ENCODE measurements at regions of chr3 and their contacts with region 1.

Region 1: DNA sequence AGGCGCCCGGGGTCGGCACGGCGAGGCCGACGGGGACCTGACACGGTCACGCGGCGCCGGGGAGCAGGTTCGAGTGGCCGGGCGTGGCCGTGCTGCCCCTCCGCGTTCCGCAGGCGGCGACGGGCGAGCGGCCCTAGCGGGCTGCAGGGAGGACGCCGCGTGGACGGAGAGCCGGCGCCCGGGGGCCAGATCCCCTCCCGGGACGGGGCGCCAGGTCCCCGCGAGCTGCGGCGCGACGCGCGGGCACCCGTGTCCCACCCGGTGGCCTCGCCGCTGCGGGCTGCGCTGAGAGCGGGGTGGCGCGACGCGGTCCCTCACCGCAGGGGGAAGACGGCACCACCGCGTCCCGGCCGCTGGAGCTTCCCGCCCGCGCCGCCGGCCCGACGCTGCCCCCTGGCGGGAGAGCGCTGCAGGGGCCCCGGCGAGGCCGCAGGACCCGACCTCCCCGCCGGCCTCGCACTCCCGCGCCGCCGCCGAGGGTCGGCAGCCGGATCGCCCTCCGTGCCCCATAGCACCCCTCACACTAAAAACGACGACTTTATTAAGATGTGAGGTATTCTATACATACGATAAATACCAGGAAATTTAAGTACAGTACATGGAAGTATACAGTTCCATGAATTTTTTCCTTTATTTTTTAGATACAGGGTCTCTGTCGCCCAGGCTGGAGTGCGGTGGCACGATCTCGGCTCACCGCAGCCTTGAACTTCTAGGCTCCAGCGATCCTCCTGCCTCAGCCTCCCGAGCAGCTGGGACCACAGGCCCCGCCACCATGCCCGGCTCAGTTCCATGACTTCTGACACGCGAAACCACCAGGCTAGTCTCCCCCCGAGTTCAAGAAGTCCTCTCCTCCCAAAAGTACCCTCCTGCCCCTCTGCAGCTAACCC is 1.3 kb upstream of the PIGZ start:
- DNase-seq: peak; percentile 81
- ATAC-seq: peak; percentile 73
- H3K4me3 Mint-ChIP-seq: peak overlapping the region; percentile 83
- H3K27ac Mint-ChIP-seq: peak overlapping the region; percentile 70
- H3K4me1 Mint-ChIP-seq: peaks cover 27% of the 10 kb centered on the region
- H3K27me3 Mint-ChIP-seq: no peaks in the 10 kb centered on the region
- CTCF ChIP-seq: peak; percentile 38

Region 2: DNA sequence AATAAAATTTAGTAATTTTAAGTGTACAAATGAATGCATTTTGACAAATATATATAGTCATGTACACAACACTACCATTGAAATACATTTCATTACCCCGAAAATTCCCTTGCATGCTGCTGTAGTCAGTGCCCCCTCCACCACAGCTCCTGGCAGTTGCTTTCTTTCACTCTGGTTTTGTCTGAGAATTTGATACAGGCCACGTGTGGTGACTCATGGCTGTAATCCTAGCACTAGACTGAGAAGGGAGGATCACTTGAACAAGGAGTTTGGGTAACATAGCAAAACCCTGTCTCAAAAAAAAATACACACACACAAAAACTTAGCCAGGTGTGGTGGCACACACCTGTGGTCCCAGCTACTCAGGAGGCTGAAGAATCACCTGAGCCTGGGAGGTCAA is 953.4 kb before region 1 on chr3:
- CTCF ChIA-PET with region 1: no interaction called
- POLR2A ChIA-PET with region 1: no interaction called
- intact Hi-C with region 1: no loop called
- DNase-seq: no peak
- ATAC-seq: no peak
- H3K4me3 Mint-ChIP-seq: no peak overlapping the region
- H3K27ac Mint-ChIP-seq: no peak overlapping the region
- H3K4me1 Mint-ChIP-seq: no peaks in the 10 kb centered on the region
- H3K27me3 Mint-ChIP-seq: peaks cover 4% of the 10 kb centered on the region
- CTCF ChIP-seq: no peak

Region 3: GRCh38 chr3:196528639-196529233 is 441.2 kb before region 1 on chr3:
- CTCF ChIA-PET with region 1: interaction called, 7 read pairs
- POLR2A ChIA-PET with region 1: no interaction called
- intact Hi-C with region 1: loop called (anchors 2 kb)
- DNase-seq: peak; percentile 92
- ATAC-seq: peak; percentile 97
- H3K4me3 Mint-ChIP-seq: peak overlapping the region; percentile 77
- H3K27ac Mint-ChIP-seq: peak overlapping the region; percentile 68
- H3K4me1 Mint-ChIP-seq: peaks cover 9% of the 10 kb centered on the region
- H3K27me3 Mint-ChIP-seq: no peaks in the 10 kb centered on the region
- CTCF ChIP-seq: no peak

Region 4: DNA sequence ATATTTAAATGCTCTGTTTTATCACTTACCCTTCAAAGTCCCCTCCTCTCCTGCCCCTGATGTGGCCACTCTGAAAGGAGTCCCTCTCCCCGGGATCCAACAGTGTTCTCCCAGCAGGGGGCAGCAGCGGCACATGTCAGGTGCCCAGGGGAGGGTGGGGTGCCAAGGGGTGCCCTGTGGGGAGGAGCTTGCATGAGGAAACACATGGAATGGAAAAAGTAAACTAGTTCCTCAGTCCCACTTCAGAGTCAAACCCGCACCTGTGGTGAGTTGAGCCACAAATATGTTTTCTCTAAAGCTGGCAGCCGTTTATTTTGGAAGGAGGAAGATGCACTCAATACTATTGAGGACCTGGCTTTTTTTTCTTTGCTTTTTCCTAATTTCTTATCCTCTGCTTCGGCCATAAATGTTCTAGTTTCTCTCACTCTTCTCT is 360.5 kb before region 1 on chr3:
- CTCF ChIA-PET with region 1: interaction called, 4 read pairs
- POLR2A ChIA-PET with region 1: no interaction called
- intact Hi-C with region 1: loop called (anchors 1 kb)
- DNase-seq: peak; percentile 89
- ATAC-seq: peak; percentile 96
- H3K4me3 Mint-ChIP-seq: peak overlapping the region; percentile 52
- H3K27ac Mint-ChIP-seq: peak overlapping the region; percentile 69
- H3K4me1 Mint-ChIP-seq: peaks cover 20% of the 10 kb centered on the region
- H3K27me3 Mint-ChIP-seq: no peaks in the 10 kb centered on the region
- CTCF ChIP-seq: peak; percentile 52

Region 5: DNA sequence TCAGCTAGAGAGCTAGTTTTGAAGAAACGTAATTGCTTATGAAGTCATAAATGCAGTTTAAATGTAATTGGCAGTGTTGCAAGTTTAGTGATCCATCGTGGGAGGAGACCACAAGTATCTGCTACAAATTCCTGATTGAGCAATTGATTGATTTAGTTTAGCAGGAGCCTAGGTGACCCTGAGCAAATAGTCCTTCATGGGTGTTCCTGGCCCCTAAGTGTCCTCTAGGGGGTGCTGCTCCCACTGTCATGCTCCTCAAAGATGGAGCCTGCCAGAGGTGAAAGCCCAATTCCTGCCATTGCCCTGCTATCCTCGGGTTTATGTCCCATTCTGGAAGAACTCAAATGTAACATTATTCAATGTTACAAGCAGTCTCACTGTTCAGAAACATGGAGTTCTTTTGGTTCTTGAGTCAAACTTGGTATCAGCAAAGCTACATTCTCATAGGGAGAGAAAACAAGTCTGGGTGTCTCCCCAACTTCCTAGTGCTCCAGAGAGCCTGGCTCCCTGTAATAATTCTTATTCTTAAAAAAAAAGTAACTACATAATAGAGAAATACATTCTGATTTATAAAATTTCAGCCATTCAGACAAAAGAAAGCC is 132.0 kb before region 1 on chr3:
- CTCF ChIA-PET with region 1: interaction called, 65 read pairs
- POLR2A ChIA-PET with region 1: interaction called, 4 read pairs
- intact Hi-C with region 1: loop called (anchors 1 kb)
- DNase-seq: peak; percentile 36
- ATAC-seq: peak; percentile 93
- H3K4me3 Mint-ChIP-seq: no peak overlapping the region
- H3K27ac Mint-ChIP-seq: no peak overlapping the region
- H3K4me1 Mint-ChIP-seq: no peaks in the 10 kb centered on the region
- H3K27me3 Mint-ChIP-seq: no peaks in the 10 kb centered on the region
- CTCF ChIP-seq: no peak

Region 6: DNA sequence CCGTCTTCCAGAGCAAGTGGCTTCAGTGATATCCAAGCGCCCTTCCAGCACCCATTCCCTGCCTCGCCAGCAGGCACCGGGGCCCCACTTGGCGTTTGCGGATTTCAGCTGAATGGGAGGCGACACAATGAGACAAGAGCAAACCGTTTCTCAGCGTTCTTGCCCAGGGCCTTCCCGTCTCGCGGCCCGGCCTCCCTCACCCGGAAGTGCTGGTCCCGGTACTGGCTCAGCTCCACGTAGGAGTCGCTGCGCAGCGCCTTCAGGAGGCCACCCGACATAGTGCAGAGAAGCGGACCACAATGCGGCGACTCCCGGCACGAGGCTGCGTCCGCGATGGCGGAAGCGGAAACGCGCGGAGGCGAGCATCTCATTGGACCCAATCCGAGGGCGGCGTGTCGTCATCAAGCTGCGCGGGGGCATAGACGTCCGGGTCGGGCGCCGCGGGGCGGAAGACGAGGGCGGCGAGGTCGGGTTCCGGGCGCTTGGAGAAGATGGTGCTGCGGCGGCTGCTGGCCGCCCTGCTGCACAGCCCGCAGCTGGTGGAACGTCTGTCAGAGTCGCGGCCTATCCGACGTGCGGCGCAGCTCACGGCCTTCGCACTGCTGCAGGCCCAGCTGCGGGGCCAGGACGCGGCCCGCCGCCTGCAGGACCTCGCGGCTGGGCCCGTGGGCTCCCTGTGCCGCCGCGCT is 27.5 kb before region 1 on chr3 and contains the start of gene NCBP2:
- CTCF ChIA-PET with region 1: interaction called, 6 read pairs
- POLR2A ChIA-PET with region 1: interaction called, 14 read pairs
- intact Hi-C with region 1: loop called (anchors 1 kb)
- DNase-seq: peak; percentile 99
- ATAC-seq: peak; percentile 91
- H3K4me3 Mint-ChIP-seq: peak within 1 kb of the TSS; percentile 95
- H3K27ac Mint-ChIP-seq: peak within 1 kb of the TSS; percentile 95
- H3K4me1 Mint-ChIP-seq: peaks cover 57% of the 10 kb centered on the region
- H3K27me3 Mint-ChIP-seq: no peaks in the 10 kb centered on the region
- CTCF ChIP-seq: no peak
- total RNA-seq, gene NCBP2: 77.8 and 85.1 TPM in 2 replicates

Region 7: GRCh38 chr3:197516517-197516889 is 546.6 kb after region 1 on chr3:
- CTCF ChIA-PET with region 1: no interaction called
- POLR2A ChIA-PET with region 1: no interaction called
- intact Hi-C with region 1: loop called (anchors 10 kb)
- DNase-seq: no peak
- ATAC-seq: peak; percentile 60
- H3K4me3 Mint-ChIP-seq: no peak overlapping the region
- H3K27ac Mint-ChIP-seq: peak overlapping the region; percentile 83
- H3K4me1 Mint-ChIP-seq: peaks cover 13% of the 10 kb centered on the region
- H3K27me3 Mint-ChIP-seq: no peaks in the 10 kb centered on the region
- CTCF ChIP-seq: no peak

Measured in activated B cell treated with CpG ODN at 0.5 μM for 24 hours (primary cell).